ENCODE measurements at regions of chrX and their contacts with region 1.

Region 1: GRCh38 chrX:86047174-86047935 is at the start of gene CHM:
- DNase-seq: peak; percentile 39 to 57
- ATAC-seq: peak; percentile 100
- H3K4me3 ChIP-seq: peak within 1 kb of the TSS; percentile 65 to 81 (median 68)
- H3K27ac ChIP-seq: peak within 1 kb of the TSS; percentile 74 to 90 (median 86)
- H3K4me1 ChIP-seq: peaks cover 9 to 12% of the 10 kb centered on the region in 2 donors
- H3K27me3 ChIP-seq: no peaks in the 10 kb centered on the region
- CTCF ChIP-seq: no peak
- POLR2A ChIP-seq: peak; percentile 36 to 39
- total RNA-seq, gene CHM: 10.4 to 17.8 (median 13.8) TPM

Region 2: GRCh38 chrX:85851418-85851817 is 195.9 kb before region 1 on chrX:
- in situ Hi-C with region 1: no loop called
- intact Hi-C with region 1: loop called (anchors 10 kb)
- DNase-seq: no peak
- ATAC-seq: no peak
- H3K4me3 ChIP-seq: no peak overlapping the region
- H3K27ac ChIP-seq: no peak overlapping the region
- H3K4me1 ChIP-seq: no peaks in the 10 kb centered on the region
- H3K27me3 ChIP-seq: no peaks in the 10 kb centered on the region
- CTCF ChIP-seq: peak in 1 of 5 experiments; percentile 29
- POLR2A ChIP-seq: no peak

Region 3: DNA sequence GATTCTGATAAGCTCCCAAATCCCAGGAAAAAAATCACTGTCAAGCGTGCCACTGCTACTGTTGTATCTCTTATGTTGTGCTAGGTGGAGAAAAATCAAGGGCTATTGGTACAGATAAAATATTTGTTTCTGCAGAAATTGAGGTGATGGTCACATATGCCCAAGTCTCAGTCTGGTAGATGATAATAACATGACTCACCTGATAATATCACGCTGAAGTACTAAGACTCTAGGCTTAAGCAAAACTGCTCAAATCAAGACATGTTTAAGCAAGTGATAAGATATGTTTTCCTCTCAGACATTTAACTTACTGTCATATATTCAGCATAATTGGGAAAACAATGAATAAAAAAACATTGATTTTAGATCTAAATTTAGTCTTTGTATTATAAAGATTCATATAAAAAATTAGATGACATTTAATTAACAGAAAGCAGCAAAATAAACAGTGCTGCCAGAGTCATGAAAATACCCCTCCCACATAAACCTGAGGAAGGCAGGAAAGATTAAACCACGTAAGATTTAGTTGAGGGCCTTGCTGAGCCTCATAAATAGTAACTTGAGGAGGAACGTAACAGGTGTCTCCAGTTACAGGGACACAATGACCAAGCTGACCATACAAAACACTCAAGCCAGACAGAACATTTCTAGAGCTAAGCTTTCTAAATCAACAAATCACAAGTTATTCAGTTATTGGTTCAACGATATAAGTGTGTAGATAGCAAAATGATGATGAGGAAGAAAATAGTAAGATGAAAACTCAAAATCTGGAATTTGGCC is 143.5 kb before region 1 on chrX:
- in situ Hi-C with region 1: no loop called
- intact Hi-C with region 1: loop called (anchors 10 kb)
- DNase-seq: peak in 1 of 2 donors; percentile 18
- ATAC-seq: peak; percentile 99
- H3K4me3 ChIP-seq: no peak overlapping the region
- H3K27ac ChIP-seq: peak overlapping the region; percentile 41 to 79 (median 60)
- H3K4me1 ChIP-seq: peaks cover 0 to 5% of the 10 kb centered on the region in 2 donors
- H3K27me3 ChIP-seq: no peaks in the 10 kb centered on the region
- CTCF ChIP-seq: no peak
- POLR2A ChIP-seq: no peak

Measured in gastrocnemius medialis (tissue), 4 donors.